Aorta (tissue), 5 donors: ENCODE measurements at regions of chr2 and their contacts with region 1.

Region 1: GRCh38 chr2:18544171-18544570 is 16.3 kb downstream of the RDH14 start:
- DNase-seq: no peak
- ATAC-seq: no peak
- H3K4me3 ChIP-seq: no peak overlapping the region
- H3K27ac ChIP-seq: no peak overlapping the region
- H3K4me1 ChIP-seq: peaks cover 0 to 4% of the 10 kb centered on the region in 2 donors
- H3K27me3 ChIP-seq: no peaks in the 10 kb centered on the region

Region 2: GRCh38 chr2:18701981-18702380 is 157.8 kb after region 1 on chr2:
- intact Hi-C with region 1: no loop called
- DNase-seq: no peak
- ATAC-seq: no peak
- H3K4me3 ChIP-seq: no peak overlapping the region
- H3K27ac ChIP-seq: no peak overlapping the region
- H3K4me1 ChIP-seq: no peaks in the 10 kb centered on the region
- H3K27me3 ChIP-seq: no peaks in the 10 kb centered on the region

Region 3: GRCh38 chr2:19461504-19462255 is 917.5 kb after region 1 on chr2:
- intact Hi-C with region 1: loop called in 1 of 2 experiments (anchors 5 kb)
- DNase-seq: no peak
- ATAC-seq: no peak
- H3K4me3 ChIP-seq: no peak overlapping the region
- H3K27ac ChIP-seq: no peak overlapping the region
- H3K4me1 ChIP-seq: peaks cover 0 to 2% of the 10 kb centered on the region in 2 donors
- H3K27me3 ChIP-seq: no peaks in the 10 kb centered on the region